ENCODE measurements at regions of chr5 and their contacts with region 1.

Region 1: GRCh38 chr5:73902327-73903051 is 276.5 kb downstream of the ARHGEF28 start:
- DNase-seq: no peak
- ATAC-seq: no peak
- H3K4me3 Mint-ChIP-seq: no peak overlapping the region
- H3K27ac Mint-ChIP-seq: no peak overlapping the region
- H3K4me1 Mint-ChIP-seq: peaks cover 16% of the 10 kb centered on the region
- H3K27me3 Mint-ChIP-seq: peaks cover 53% of the 10 kb centered on the region

Region 2: DNA sequence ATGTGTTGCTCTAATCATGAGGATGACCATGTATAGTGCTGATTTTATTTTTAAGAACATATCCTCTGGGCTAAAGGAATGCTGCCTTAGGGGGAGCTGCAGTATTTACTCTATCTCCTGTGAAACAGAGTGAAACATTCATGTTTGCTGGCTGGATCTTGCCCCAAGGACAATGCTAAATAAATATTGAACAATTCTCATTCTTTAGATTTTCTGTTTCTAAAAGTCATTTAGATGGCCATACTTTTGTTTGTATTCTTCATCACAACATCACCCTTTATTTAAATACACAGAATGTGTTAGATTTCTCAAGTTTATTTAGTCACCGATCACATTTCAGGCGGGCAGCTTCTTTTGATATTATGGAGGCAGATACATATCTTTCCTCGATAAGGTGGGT is 173.2 kb before region 1 on chr5:
- CTCF ChIA-PET with region 1: no interaction called
- DNase-seq: no peak
- ATAC-seq: no peak
- H3K4me3 Mint-ChIP-seq: no peak overlapping the region
- H3K27ac Mint-ChIP-seq: no peak overlapping the region
- H3K4me1 Mint-ChIP-seq: no peaks in the 10 kb centered on the region
- H3K27me3 Mint-ChIP-seq: peaks cover 19% of the 10 kb centered on the region

Region 3: DNA sequence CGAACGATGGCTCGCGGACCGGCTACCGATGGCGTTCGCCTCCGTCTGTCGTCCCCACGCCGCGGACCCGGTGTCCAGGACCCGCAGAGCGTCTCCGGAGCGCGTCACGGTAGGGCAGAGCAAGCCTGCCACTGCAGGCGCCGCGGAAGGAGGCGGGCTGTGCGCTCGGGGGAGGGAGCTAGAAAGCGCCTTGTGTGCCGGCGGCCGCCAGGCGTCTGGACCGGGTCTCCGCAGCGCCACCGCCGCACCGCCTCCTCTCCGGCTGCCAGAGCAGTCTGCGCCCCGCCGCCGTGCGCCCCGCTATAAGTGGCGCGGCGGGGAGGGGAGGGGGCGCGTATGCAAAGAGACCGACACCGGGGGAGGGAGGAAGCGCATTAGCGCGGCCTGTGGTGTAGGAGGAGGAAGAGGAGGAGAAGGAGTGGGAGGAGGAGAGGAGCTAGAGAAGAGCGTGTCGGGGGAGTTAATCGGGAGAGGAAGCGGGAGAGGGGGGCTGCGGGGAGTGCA is 738.0 kb after region 1 on chr5 and contains the start of gene ENC1:
- CTCF ChIA-PET with region 1: interaction called, 29 read pairs
- DNase-seq: peak; percentile 81
- ATAC-seq: peak; percentile 92
- H3K4me3 Mint-ChIP-seq: peak within 1 kb of the TSS; percentile 76
- H3K27ac Mint-ChIP-seq: no peak within 1 kb of the TSS
- H3K4me1 Mint-ChIP-seq: peaks cover 27% of the 10 kb centered on the region
- H3K27me3 Mint-ChIP-seq: peaks cover 84% of the 10 kb centered on the region
- total RNA-seq, gene ENC1: 0.38 to 1.5 TPM

Region 4: DNA sequence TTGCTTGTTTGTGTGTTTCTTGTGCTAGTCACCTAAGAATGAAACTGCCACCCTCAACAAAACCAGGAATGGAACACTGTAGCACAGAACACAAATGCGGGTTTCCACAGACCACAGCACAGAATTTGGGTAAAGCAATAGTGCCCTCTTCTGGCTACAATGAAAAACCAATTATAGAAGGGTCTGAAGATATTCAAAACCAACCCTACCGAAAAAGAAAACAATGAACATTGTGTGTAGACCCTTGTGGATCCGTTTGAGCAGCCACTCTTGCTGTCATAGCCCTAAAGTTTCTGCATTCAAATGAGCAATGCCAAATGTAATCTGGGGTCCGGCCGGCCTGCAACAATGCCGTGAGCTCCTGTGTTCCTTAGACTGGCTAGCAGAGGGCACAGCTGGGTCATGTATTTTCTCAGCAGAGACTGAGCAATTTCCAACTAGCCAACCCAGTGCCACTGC is 746.4 kb after region 1 on chr5:
- CTCF ChIA-PET with region 1: interaction called, 29 read pairs
- DNase-seq: peak; percentile 62
- ATAC-seq: peak; percentile 80
- H3K4me3 Mint-ChIP-seq: no peak overlapping the region
- H3K27ac Mint-ChIP-seq: no peak overlapping the region
- H3K4me1 Mint-ChIP-seq: peaks cover 8% of the 10 kb centered on the region
- H3K27me3 Mint-ChIP-seq: peaks cover 56% of the 10 kb centered on the region

Measured in activated CD8-positive, alpha-beta memory T cell treated with anti-CD3 and anti-CD28 coated beads, Interleukin-2, amount 10 ng/mL, durations not matched to agents 7 days and 5 days (primary cell).